ENCODE measurements at regions of chr2 and their contacts with region 1.

Region 1: GRCh38 chr2:24329700-24330099 is 30.6 kb downstream of the ITSN2 start:
- DNase-seq: no peak
- ATAC-seq: peak; percentile 66
- H3K4me3 ChIP-seq: peak overlapping the region; percentile 66
- H3K27ac ChIP-seq: peak overlapping the region; percentile 92
- H3K4me1 ChIP-seq: peaks cover 36% of the 10 kb centered on the region
- H3K27me3 ChIP-seq: no peaks in the 10 kb centered on the region
- CTCF ChIP-seq: no peak
- EP300 ChIP-seq: peak in 1 of 2 experiments; percentile 68; a peak in 1 of 4 replicates
- POLR2A ChIP-seq: no peak
- RAD21 ChIP-seq: no peak

Region 2: DNA sequence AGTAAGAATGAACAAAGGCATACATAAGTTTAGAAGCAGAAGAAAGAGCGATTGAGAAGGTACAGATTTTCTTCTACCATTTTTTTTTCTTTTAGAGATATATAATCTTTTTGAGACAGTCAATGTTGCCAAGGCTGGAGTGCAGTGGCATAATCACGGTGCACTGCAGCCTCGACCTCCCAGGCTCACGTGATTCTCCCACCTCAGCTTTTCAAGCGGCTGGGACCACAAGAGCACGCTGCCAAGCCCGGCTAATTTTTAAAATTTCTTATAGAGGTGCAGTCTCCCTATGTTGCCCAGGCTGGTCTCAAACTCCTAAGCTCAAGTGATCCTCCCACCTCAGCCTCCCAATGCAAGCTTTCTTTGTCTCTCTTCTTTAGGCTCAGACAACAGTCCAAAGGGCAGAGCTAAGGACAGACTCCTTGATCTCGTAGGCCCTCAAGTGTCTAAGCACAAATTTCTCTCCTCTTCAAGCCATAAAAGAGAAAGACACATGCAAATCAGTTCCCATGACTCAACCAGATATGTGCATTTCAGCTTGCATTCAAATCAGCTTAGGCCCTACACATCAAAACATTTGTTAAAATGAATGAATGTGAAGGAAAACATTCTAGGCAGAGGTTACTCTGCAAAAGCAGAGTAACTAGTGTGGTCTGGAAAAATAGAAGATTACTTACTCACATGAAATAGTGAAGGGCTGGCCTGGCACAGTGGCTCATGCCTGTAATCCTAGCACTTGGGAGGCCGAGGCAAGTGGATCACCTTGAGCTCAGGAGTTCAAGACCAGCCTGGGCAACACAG is 12.6 kb after region 1 on chr2:
- CTCF ChIA-PET with region 1: interaction called, 40 read pairs
- POLR2A ChIA-PET with region 1: interaction called, 48 read pairs
- RAD21 ChIA-PET with region 1: interaction called, 33 read pairs
- SMC1A ChIA-PET with region 1: interaction called, 102 read pairs
- in situ Hi-C with region 1: no loop called
- intact Hi-C with region 1: loop called (anchors 2 kb)
- DNase-seq: peak; percentile 68
- ATAC-seq: peak; percentile 81
- H3K4me3 ChIP-seq: peak overlapping the region; percentile 9; the same call in 1 of the 2 replicates
- H3K27ac ChIP-seq: peak overlapping the region; percentile 71
- H3K4me1 ChIP-seq: peaks cover 40% of the 10 kb centered on the region
- H3K27me3 ChIP-seq: no peaks in the 10 kb centered on the region
- CTCF ChIP-seq: peak in 2 of 3 experiments; percentile 12 to 40; a peak in 2 of 6 replicates
- EP300 ChIP-seq: peak in 1 of 2 experiments; percentile 22; a peak in 1 of 4 replicates
- POLR2A ChIP-seq: peak; percentile 50; the same call in 1 of the 2 replicates
- RAD21 ChIP-seq: peak; percentile 47; the same call in 1 of the 2 replicates

Region 3: GRCh38 chr2:24351981-24352380 is 22.3 kb after region 1 on chr2:
- CTCF ChIA-PET with region 1: interaction called, 15 read pairs
- POLR2A ChIA-PET with region 1: interaction called, 5 read pairs
- RAD21 ChIA-PET with region 1: interaction called, 17 read pairs
- SMC1A ChIA-PET with region 1: interaction called, 36 read pairs
- in situ Hi-C with region 1: no loop called
- intact Hi-C with region 1: no loop called
- DNase-seq: no peak
- ATAC-seq: 0 out of 3 replicates have a peak, but pooled peaks have one; percentile 10
- H3K4me3 ChIP-seq: no peak overlapping the region
- H3K27ac ChIP-seq: no peak overlapping the region; the same call in 1 of the 2 replicates
- H3K4me1 ChIP-seq: peaks cover 29% of the 10 kb centered on the region
- H3K27me3 ChIP-seq: no peaks in the 10 kb centered on the region
- CTCF ChIP-seq: peak in 2 of 3 experiments; percentile 12 to 19; a peak in 2 of 6 replicates
- EP300 ChIP-seq: no peak
- POLR2A ChIP-seq: no peak
- RAD21 ChIP-seq: no peak

Region 4: DNA sequence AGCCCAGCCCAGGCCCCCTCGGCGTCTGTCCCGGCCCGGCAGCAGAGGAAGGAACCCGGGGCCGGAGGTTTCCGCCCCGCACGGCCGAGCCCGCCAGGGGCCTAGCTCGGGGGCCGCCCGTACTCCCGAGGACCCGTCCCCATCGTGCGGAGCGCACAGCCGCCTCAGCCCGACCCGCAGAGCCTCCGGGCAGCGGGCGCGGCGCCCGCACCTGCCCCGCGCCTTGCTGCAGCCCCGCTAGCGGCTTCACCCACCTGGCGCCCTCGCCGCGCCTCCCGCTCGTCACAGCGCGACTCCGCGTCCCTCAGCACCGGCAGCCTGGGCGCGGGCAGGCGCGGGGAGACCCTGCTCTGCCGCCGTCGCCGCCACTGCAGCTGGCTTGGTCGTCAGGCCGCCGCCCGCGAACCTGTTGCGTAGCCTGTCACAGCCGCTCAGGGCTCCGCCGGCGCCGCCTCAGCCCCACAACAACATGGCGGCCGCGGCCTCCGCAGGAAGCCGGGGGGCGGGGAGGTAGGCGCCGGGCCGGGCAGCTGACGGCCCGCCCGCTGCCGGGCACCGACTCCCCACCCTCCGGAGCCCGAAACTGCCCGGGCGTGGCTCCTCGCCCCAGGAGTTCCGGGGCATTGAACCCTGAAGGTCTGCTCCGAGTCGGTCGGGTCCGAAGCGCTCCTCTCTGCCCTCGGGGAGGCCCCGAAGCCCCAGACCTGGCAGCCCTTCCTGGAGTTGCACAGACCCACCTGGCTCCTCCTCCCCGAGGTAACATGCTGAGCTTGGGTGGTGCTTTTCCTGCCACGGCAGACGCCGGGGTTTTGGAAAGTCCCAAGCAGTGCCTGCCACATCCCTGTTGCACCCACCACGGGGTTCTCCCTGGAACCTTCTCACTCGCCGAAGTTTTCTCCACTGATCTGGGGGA is 30.6 kb after region 1 on chr2 and contains the start of gene ITSN2:
- CTCF ChIA-PET with region 1: interaction called, 4 read pairs
- POLR2A ChIA-PET with region 1: interaction called, 10 read pairs
- RAD21 ChIA-PET with region 1: interaction called, 32 read pairs
- SMC1A ChIA-PET with region 1: interaction called, 24 read pairs
- in situ Hi-C with region 1: no loop called
- intact Hi-C with region 1: no loop called
- DNase-seq: peak; percentile 68
- ATAC-seq: peak; percentile 90
- H3K4me3 ChIP-seq: peak within 1 kb of the TSS; percentile 79
- H3K27ac ChIP-seq: peak within 1 kb of the TSS; percentile 93
- H3K4me1 ChIP-seq: peaks cover 10% of the 10 kb centered on the region
- H3K27me3 ChIP-seq: no peaks in the 10 kb centered on the region
- CTCF ChIP-seq: no peak
- EP300 ChIP-seq: no peak
- POLR2A ChIP-seq: peak; percentile 89
- RAD21 ChIP-seq: no peak
- polyA plus RNA-seq, gene ITSN2: 20.5 to 24.3 TPM

Measured in GM12878 (cell line).